Common myeloid progenitor, CD34-positive (primary cell): ENCODE measurements at regions of chr7 and their contacts with region 1.

Region 1: GRCh38 chr7:154942691-154943090 is 60.2 kb downstream of the PAXIP1 start:
- DNase-seq: no peak
- H3K4me3 ChIP-seq: no peak overlapping the region
- H3K27ac ChIP-seq: no peak overlapping the region
- H3K4me1 ChIP-seq: no peaks in the 10 kb centered on the region
- H3K27me3 ChIP-seq: no peaks in the 10 kb centered on the region

Region 2: GRCh38 chr7:154913638-154914312 is 28.9 kb before region 1 on chr7:
- CTCF ChIA-PET with region 1: interaction called, 10 read pairs
- POLR2A ChIA-PET with region 1: no interaction called
- DNase-seq: peak; percentile 65 to 77 (median 73)
- H3K4me3 ChIP-seq: peak overlapping the region in 5 of 7 experiments; percentile 3 to 70 (median 51)
- H3K27ac ChIP-seq: no peak overlapping the region
- H3K4me1 ChIP-seq: peaks cover 0 to 12% (median 5%) of the 10 kb centered on the region in 4 experiments
- H3K27me3 ChIP-seq: peaks cover 0 to 43% (median 16%) of the 10 kb centered on the region in 5 experiments

Region 3: DNA sequence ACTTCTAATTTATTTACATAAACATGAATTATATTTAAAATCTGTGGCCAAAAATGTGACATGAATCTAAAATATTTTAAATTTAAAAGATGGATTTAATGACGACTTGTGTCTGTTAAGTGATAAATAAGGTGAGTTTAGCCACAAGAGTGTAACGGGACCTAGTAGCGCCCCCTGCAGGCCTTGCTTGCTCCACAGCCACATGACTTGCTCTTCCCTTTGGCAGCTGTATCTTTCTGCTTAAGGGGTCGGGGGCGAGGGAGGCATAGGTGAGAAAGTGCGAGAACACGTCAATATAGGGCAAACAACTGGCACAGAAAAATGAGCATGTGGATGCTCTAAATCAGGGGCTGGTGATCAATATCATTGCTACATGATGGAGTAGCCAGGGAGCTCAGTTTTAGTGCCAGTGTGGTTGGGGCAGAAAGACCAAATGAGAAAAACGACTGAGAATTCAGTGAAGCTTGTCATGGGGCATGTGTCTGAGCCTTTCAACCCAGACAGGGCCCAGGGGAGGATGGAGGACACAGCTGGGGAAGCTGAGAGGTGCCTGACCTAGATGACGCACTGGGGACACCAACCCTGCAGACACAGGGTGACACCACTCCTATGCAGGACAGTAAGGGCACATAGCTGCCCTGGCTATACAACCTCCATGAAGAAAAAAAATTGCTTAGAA is 10.5 kb after region 1 on chr7:
- CTCF ChIA-PET with region 1: interaction called, 15 read pairs
- POLR2A ChIA-PET with region 1: no interaction called
- DNase-seq: peak; percentile 57 to 74 (median 67)
- H3K4me3 ChIP-seq: no peak overlapping the region
- H3K27ac ChIP-seq: no peak overlapping the region
- H3K4me1 ChIP-seq: no peaks in the 10 kb centered on the region
- H3K27me3 ChIP-seq: no peaks in the 10 kb centered on the region